ENCODE measurements at regions of chrX and their contacts with region 1.

Region 1: GRCh38 chrX:43654431-43655150 is 1.5 kb upstream of the MAOA start:
- DNase-seq: peak; percentile 92
- H3K4me3 ChIP-seq: peak overlapping the region; percentile 85
- H3K27ac ChIP-seq: peak overlapping the region; percentile 95
- H3K4me1 ChIP-seq: peaks cover 8% of the 10 kb centered on the region
- H3K27me3 ChIP-seq: no peaks in the 10 kb centered on the region
- CTCF ChIP-seq: peak; percentile 55

Region 2: DNA sequence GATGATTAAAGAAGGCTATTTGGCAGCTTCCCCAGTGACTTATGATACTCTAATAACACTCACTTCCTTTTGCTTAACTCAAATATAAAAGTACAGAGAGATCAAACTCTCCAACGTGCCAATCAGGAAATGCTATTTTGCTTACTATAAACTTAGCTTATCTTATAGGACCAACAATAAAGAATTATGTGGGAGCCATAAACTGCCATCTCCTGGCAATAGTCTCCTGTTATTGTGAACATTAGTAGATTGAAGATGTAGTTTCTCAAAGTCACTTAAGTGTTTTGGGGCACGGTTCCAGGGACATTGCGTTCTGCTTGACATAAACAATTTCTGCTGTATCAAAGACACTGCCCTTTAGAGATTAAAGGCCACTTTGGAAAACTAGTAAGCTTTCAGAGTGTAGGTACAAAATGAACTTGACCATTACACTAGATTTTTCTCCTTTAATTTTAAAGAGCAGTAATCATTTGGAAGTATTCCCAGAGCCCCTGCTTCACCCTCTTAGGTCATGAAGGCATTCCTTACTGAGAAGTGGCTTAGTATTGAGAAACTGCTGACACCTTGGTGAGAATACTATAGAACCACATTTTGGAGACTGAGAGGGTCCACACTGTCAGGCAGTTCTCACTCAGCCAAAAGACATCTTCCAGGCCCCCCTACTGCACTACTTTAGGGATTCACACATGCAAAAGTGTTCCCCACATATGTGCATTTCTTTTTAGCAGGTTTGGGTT is 53.4 kb after region 1 on chrX:
- intact Hi-C with region 1: loop called (anchors 5 kb)
- DNase-seq: peak; percentile 60
- H3K4me3 ChIP-seq: no peak overlapping the region
- H3K27ac ChIP-seq: peak overlapping the region; percentile 91
- H3K4me1 ChIP-seq: peaks cover 63% of the 10 kb centered on the region
- H3K27me3 ChIP-seq: no peaks in the 10 kb centered on the region
- CTCF ChIP-seq: no peak

Region 3: DNA sequence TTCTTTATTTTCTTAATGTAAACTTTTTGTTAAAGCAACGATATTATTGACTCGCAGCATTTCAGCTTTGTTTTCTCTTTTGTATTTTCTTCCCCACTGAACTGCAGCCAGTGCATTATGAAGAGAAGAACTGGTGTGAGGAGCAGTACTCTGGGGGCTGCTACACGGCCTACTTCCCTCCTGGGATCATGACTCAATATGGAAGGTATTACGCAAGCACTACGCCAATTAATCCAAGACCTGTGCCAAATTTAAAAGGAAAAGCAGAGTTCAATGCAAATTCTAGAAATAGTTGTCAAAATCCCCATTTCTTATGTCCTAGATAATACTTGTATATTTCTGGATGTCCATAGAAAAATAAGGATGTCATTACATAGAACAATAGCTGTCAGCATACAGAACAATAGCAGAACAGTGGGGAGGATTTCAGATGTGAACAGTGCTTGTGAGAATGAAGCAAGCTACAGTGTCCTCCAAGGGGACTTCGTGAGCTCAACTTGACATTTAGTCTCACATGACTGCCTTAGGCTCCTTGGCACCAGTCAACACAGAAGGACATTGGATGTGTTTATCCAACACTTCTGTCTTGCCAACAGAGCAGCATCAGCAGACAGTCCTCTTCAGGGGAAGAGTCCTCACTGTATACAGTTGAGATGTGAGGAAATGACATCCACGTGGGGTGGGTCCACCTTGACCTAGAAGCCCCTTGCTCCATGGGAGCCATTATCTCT is 87.4 kb after region 1 on chrX:
- intact Hi-C with region 1: loop called (anchors 10 kb)
- DNase-seq: no peak
- H3K4me3 ChIP-seq: no peak overlapping the region
- H3K27ac ChIP-seq: peak overlapping the region; percentile 73
- H3K4me1 ChIP-seq: peaks cover 31% of the 10 kb centered on the region
- H3K27me3 ChIP-seq: no peaks in the 10 kb centered on the region
- CTCF ChIP-seq: no peak

Measured in left ventricle myocardium inferior (tissue), 1 donor.